Activated CD8-positive, alpha-beta T cell treated with anti-CD3 and anti-CD28 coated beads for 36 hours (primary cell): ENCODE measurements at regions of chr2 and their contacts with region 1.

Region 1: GRCh38 chr2:7044261-7045250 is 127.3 kb downstream of the RNF144A start:
- DNase-seq: peak; percentile 69
- ATAC-seq: peak; percentile 86
- H3K4me3 Mint-ChIP-seq: no peak overlapping the region
- H3K27ac Mint-ChIP-seq: no peak overlapping the region
- H3K4me1 Mint-ChIP-seq: peaks cover 22% of the 10 kb centered on the region
- H3K27me3 Mint-ChIP-seq: no peaks in the 10 kb centered on the region
- CTCF ChIP-seq: peak; percentile 97

Region 2: DNA sequence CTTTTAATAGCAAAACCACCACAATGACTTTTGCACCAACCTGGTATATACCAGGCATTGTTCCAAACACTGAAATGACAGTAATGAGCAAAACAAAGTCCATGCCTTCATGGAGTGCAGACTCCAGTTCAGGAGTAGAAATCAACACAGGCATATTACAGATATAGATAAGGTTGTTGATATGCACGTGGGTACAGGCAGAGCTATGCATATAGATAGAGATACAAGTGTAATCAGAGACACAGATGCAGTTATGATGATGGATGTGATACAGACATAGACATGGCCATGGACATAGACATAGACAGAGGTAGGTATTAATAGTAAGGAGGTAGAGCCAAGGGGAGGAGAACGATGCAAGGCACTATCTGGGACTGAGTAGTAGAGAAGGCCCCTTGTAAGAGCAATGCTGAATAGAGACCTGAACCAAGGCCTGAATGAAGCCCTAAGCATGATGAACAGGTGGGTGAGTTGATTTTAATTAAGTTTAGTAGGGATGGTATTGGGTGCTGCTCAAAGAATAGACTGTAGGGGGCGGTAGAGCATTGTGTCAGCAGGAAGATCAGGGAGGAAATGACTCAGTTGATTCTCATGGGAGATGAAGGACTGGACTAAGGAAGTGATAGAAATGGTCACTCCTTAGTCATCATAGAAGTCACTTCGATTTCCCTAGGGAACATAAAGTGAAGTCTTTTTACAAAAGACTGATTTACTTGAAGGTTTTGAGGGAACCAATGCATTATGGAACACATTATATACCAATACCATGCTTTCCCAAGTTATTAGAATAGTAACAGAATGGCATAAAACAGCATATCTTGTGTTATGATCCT is 218.3 kb before region 1 on chr2:
- CTCF ChIA-PET with region 1: interaction called, 6 read pairs
- POLR2A ChIA-PET with region 1: no interaction called
- intact Hi-C with region 1: loop called (anchors 5 kb)
- DNase-seq: peak; percentile 82
- ATAC-seq: peak; percentile 96
- H3K4me3 Mint-ChIP-seq: no peak overlapping the region
- H3K27ac Mint-ChIP-seq: no peak overlapping the region
- H3K4me1 Mint-ChIP-seq: peaks cover 9% of the 10 kb centered on the region
- H3K27me3 Mint-ChIP-seq: no peaks in the 10 kb centered on the region
- CTCF ChIP-seq: peak; percentile 85

Region 3: DNA sequence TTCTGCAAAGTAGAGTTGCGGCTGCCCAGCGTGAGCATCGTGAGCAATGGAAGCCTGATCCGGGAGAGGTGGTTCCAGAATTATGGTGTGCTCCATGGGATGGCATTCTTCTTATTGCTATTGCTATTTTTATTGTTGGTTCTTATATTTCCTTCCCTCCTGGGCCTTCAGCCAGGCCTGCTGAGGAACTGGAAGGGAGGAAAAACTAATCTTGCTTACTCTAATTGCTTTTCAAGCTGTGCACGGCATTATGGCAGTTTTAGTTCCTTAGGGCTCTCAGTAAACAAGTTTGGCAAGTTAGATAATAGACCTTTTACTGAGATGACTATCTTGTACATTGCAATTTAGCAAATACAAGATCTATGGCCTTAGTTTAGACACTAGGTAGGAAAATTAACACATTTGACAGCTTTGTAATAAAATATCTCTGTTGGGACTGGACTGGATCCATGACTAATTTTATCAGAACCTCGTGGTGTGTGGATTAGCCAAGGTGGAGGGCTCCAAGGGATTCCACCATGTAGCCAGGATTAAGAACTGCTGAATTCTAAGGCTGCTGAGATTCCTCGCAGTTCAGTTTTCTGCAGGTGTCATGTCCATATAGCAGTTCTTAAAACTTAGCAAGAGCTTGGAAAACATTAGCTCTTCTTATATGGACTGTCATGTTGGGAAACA is 161.0 kb before region 1 on chr2:
- CTCF ChIA-PET with region 1: interaction called, 11 read pairs
- POLR2A ChIA-PET with region 1: no interaction called
- intact Hi-C with region 1: no loop called
- DNase-seq: no peak
- ATAC-seq: no peak
- H3K4me3 Mint-ChIP-seq: no peak overlapping the region
- H3K27ac Mint-ChIP-seq: no peak overlapping the region
- H3K4me1 Mint-ChIP-seq: peaks cover 28% of the 10 kb centered on the region
- H3K27me3 Mint-ChIP-seq: no peaks in the 10 kb centered on the region
- CTCF ChIP-seq: no peak

Region 4: DNA sequence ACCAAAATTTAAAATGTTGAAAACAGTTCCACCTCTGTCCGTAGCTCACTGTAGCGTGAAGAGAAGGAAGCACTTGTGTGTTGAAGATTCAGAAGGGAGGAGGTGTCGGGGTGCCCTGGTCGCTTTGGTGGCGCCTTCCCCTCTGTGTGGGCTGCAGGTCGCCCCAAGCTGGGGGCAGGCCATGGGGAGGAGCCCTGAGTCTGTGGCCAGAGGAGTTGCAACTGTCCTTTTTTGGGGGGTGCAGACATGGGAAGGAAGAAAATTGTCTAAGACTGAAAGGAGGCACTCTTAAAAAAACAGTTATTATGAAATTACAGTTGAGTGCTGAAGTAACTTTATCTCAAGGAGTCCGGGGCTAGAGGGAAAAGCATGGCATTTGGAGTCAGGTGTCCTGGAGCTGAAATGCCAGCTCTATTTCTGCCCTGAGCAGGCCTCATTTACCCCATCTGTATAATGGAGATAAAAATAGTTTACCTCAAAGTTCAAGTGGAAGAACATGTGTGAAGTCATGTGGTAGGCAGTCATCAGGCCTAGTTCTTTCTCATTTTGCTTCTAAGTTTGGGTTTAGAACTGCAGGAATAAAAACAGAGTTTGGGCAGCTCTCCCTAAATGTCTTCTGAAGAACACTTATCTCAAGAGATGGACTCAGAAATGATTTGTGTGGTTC is 45.2 kb before region 1 on chr2:
- CTCF ChIA-PET with region 1: interaction called, 13 read pairs
- POLR2A ChIA-PET with region 1: no interaction called
- intact Hi-C with region 1: no loop called
- DNase-seq: no peak
- ATAC-seq: no peak
- H3K4me3 Mint-ChIP-seq: no peak overlapping the region
- H3K27ac Mint-ChIP-seq: no peak overlapping the region
- H3K4me1 Mint-ChIP-seq: peaks cover 10% of the 10 kb centered on the region
- H3K27me3 Mint-ChIP-seq: no peaks in the 10 kb centered on the region
- CTCF ChIP-seq: no peak

Region 5: GRCh38 chr2:7034316-7034715 is 10.2 kb before region 1 on chr2:
- CTCF ChIA-PET with region 1: interaction called, 18 read pairs
- POLR2A ChIA-PET with region 1: no interaction called
- intact Hi-C with region 1: no loop called
- DNase-seq: no peak
- ATAC-seq: no peak
- H3K4me3 Mint-ChIP-seq: no peak overlapping the region
- H3K27ac Mint-ChIP-seq: peak overlapping the region; percentile 44
- H3K4me1 Mint-ChIP-seq: no peaks in the 10 kb centered on the region
- H3K27me3 Mint-ChIP-seq: no peaks in the 10 kb centered on the region
- CTCF ChIP-seq: no peak

Region 6: DNA sequence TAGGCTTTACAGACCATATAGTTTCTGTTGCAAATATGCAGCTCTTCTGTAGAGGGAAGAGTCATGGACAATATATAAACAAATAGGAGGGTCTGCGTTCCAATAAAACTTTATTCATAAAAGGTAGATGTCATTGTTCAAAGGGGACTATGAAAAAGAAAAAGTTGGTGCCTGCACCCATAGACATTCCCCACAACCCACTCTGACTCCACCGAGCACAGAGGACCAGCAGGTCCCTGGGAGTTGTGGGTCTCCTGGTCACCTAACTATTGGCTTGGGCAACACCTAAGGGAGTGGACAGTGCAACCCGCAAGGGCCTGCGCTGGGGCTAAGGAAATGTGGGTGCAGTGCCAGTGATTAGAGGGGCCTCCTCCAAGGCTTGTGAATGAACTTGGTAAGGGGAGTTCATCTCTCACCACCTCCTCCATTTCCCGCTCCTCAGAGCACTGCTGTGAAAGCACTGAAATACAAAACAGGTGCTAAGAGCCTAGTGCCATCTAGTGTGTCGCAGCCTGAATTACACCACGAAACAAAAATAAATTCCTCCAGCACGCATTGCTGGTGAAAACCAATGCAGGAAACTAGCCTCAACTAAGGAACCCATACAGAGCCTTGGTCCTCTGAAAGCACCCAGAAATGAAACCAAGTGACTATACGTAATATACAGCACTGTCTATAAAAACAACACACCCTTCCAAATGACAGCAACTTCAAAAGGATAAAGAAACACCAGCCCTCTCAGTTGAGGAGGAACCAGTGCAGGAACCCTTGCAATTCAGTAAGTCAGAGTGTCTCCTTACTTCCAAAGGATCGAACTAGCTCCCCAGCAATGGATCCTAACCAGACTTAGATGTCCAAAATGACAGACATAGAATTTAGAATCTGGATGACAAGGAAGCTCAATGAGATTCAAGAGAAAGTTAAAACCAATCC is 39.3 kb after region 1 on chr2:
- CTCF ChIA-PET with region 1: interaction called, 11 read pairs
- POLR2A ChIA-PET with region 1: no interaction called
- intact Hi-C with region 1: no loop called
- DNase-seq: peak; percentile 37
- ATAC-seq: peak; percentile 55
- H3K4me3 Mint-ChIP-seq: no peak overlapping the region
- H3K27ac Mint-ChIP-seq: no peak overlapping the region
- H3K4me1 Mint-ChIP-seq: peaks cover 3% of the 10 kb centered on the region
- H3K27me3 Mint-ChIP-seq: no peaks in the 10 kb centered on the region
- CTCF ChIP-seq: peak; percentile 61